ENCODE measurements at regions of chr6 and their contacts with region 1.

Region 1: GRCh38 chr6:32177788-32178546 is at the start of gene RNF5:
- DNase-seq: peak; percentile 81 to 99 (median 96)
- ATAC-seq: peak; percentile 84 to 85
- H3K4me3 Mint-ChIP-seq: peak within 1 kb of the TSS; percentile 88 to 100 (median 94)
- H3K27ac Mint-ChIP-seq: peak within 1 kb of the TSS; percentile 95 to 100 (median 98)
- H3K4me1 Mint-ChIP-seq: peaks cover 45 to 84% (median 77%) of the 10 kb centered on the region in 4 donors
- H3K27me3 Mint-ChIP-seq: no peaks in the 10 kb centered on the region
- polyA plus RNA-seq, gene RNF5: 102 to 117 (median 102) TPM

Region 2: GRCh38 chr6:32127717-32128592 is 50.0 kb before region 1 on chr6 and contains the start of gene ATF6B:
- POLR2A ChIA-PET with region 1: interaction called, 41 read pairs
- DNase-seq: peak; percentile 86 to 99 (median 97)
- ATAC-seq: peak; percentile 95 to 96
- H3K4me3 Mint-ChIP-seq: peak within 1 kb of the TSS; percentile 96 to 100 (median 98)
- H3K27ac Mint-ChIP-seq: peak within 1 kb of the TSS; percentile 90 to 99 (median 97)
- H3K4me1 Mint-ChIP-seq: peaks cover 26 to 62% (median 57%) of the 10 kb centered on the region in 4 donors
- H3K27me3 Mint-ChIP-seq: no peaks in the 10 kb centered on the region
- polyA plus RNA-seq, gene ATF6B: 17.5 to 25.7 (median 21.4) TPM

Region 3: GRCh38 chr6:32158052-32158451 is 19.9 kb before region 1 on chr6:
- POLR2A ChIA-PET with region 1: interaction called, 10 read pairs
- DNase-seq: no peak
- ATAC-seq: no peak
- H3K4me3 Mint-ChIP-seq: no peak overlapping the region
- H3K27ac Mint-ChIP-seq: no peak overlapping the region
- H3K4me1 Mint-ChIP-seq: peaks cover 21 to 34% (median 23%) of the 10 kb centered on the region in 4 donors
- H3K27me3 Mint-ChIP-seq: no peaks in the 10 kb centered on the region

Region 4: GRCh38 chr6:32163559-32164258 is 14.3 kb before region 1 on chr6:
- POLR2A ChIA-PET with region 1: interaction called, 10 read pairs
- DNase-seq: peak in 1 of 10 donors; percentile 7
- ATAC-seq: no peak
- H3K4me3 Mint-ChIP-seq: no peak overlapping the region
- H3K27ac Mint-ChIP-seq: peak overlapping the region in 3 of 10 donors; percentile 27 to 53 (median 47)
- H3K4me1 Mint-ChIP-seq: peaks cover 0 to 14% (median 4%) of the 10 kb centered on the region in 4 donors
- H3K27me3 Mint-ChIP-seq: no peaks in the 10 kb centered on the region

Region 5: GRCh38 chr6:32195652-32195901 is 17.6 kb after region 1 on chr6:
- POLR2A ChIA-PET with region 1: interaction called, 303 read pairs
- DNase-seq: peak; percentile 96 to 100 (median 99)
- ATAC-seq: peak; percentile 82 to 85
- H3K4me3 Mint-ChIP-seq: peak overlapping the region; percentile 92 to 100 (median 97)
- H3K27ac Mint-ChIP-seq: peak overlapping the region; percentile 94 to 100 (median 99)
- H3K4me1 Mint-ChIP-seq: peaks cover 29 to 49% (median 42%) of the 10 kb centered on the region in 4 donors
- H3K27me3 Mint-ChIP-seq: peaks cover 0 to 2% (median 0%) of the 10 kb centered on the region in 5 donors

Region 6: GRCh38 chr6:32234934-32235333 is 57.0 kb after region 1 on chr6:
- POLR2A ChIA-PET with region 1: no interaction called
- DNase-seq: peak in 2 of 10 donors; percentile 15
- ATAC-seq: peak; percentile 47 to 80
- H3K4me3 Mint-ChIP-seq: no peak overlapping the region
- H3K27ac Mint-ChIP-seq: peak overlapping the region in 1 of 10 donors; percentile 34
- H3K4me1 Mint-ChIP-seq: peaks cover 0 to 11% (median 3%) of the 10 kb centered on the region in 4 donors
- H3K27me3 Mint-ChIP-seq: peaks cover 0 to 2% (median 0%) of the 10 kb centered on the region in 5 donors